ENCODE measurements at regions of chr17 and their contacts with region 1.

Region 1: GRCh38 chr17:74176546-74177001 is 26.9 kb upstream of the RPL38 start:
- DNase-seq: no peak
- H3K4me3 Mint-ChIP-seq: no peak overlapping the region
- H3K27ac Mint-ChIP-seq: no peak overlapping the region
- H3K4me1 Mint-ChIP-seq: no peaks in the 10 kb centered on the region
- H3K27me3 Mint-ChIP-seq: peaks cover 12% of the 10 kb centered on the region

Region 2: DNA sequence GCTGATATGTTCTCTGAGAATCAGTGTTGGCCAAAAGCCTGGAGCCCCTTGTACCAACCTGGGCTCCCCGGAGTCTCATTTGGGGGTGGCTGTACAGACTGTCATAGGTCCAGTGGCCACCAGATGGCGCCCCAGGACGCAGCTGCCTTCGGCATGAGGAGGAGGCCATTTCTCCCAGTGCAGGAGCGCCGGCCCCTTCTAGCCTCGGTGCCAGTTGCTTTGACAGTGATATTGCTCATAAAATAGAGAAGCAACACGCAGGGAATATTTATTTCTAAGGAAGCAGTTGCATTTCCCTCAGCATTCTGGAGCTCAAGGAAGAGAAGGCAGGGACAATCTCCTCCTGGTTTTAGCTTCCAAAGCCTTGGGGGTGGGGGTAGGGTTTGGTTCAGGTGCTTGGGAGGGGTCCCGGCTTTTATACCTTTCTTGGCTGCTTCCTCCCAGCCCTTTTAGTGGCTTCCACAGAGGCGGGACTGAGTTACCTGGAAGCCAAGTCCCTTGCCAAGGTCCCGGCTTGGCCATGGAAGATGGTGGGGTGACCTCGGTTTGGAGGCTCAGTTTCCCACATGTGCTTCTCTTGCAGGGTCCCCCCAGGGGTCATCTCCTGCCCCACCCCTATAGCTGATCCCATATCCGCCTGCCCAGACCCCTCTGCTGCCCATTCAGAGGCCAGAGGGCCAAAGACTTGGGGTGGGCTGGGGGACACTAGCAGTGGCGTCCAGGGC is 747.0 kb before region 1 on chr17:
- intact Hi-C with region 1: loop called (anchors 1 kb)
- DNase-seq: peak; percentile 69
- H3K4me3 Mint-ChIP-seq: no peak overlapping the region
- H3K27ac Mint-ChIP-seq: no peak overlapping the region
- H3K4me1 Mint-ChIP-seq: peaks cover 16% of the 10 kb centered on the region
- H3K27me3 Mint-ChIP-seq: peaks cover 3% of the 10 kb centered on the region

Region 3: DNA sequence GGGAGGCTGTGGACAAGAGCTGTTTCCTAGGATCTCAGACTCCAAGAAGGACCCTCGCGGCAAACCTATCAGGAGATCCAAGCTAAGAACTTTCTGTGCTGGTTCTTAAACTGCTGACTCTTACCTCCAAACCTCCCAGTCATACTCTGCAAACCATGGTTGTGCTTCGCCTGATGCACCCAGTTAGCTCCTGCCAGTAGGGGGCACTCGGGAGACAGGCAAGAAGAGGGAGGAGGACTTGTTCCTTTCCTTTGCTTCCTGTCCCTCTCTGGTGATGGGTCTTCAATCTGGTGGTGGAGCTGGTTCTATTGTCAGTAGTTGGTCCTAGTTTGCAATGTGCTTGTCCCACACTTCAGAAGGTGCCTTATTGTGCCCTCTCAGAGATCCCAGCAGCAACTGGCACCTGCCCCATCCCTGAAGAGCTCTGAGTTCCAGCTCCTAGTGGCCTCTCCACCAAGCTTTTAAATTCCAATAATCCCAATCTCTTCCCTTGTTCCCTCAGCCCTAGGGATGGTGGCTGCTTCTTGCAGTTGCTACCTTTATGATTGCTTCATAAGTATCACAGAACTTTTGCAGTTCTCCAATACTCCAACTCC is 86.6 kb before region 1 on chr17:
- intact Hi-C with region 1: loop called (anchors 2 kb)
- DNase-seq: peak; percentile 28
- H3K4me3 Mint-ChIP-seq: no peak overlapping the region
- H3K27ac Mint-ChIP-seq: no peak overlapping the region
- H3K4me1 Mint-ChIP-seq: no peaks in the 10 kb centered on the region
- H3K27me3 Mint-ChIP-seq: peaks cover 3% of the 10 kb centered on the region

Region 4: GRCh38 chr17:74245145-74245831 is 68.7 kb after region 1 on chr17:
- intact Hi-C with region 1: no loop called
- DNase-seq: no peak
- H3K4me3 Mint-ChIP-seq: no peak overlapping the region
- H3K27ac Mint-ChIP-seq: no peak overlapping the region
- H3K4me1 Mint-ChIP-seq: no peaks in the 10 kb centered on the region
- H3K27me3 Mint-ChIP-seq: no peaks in the 10 kb centered on the region